CD4-positive, alpha-beta memory T cell (primary cell): ENCODE measurements at regions of chr19 and their contacts with region 1.

Region 1: GRCh38 chr19:16351133-16351809 is 26.6 kb downstream of the KLF2 start:
- DNase-seq: peak in 1 of 5 donors; percentile 28
- H3K4me3 ChIP-seq: peak overlapping the region in 1 of 2 donors; percentile 8
- H3K4me3 Mint-ChIP-seq: peak overlapping the region; percentile 56 to 78 (median 72)
- H3K27ac ChIP-seq: no peak overlapping the region
- H3K27ac Mint-ChIP-seq: peak overlapping the region in 6 of 7 donors; percentile 58 to 89 (median 81)
- H3K4me1 ChIP-seq: peaks cover 48% of the 10 kb centered on the region
- H3K4me1 Mint-ChIP-seq: peaks cover 22 to 61% (median 41%) of the 10 kb centered on the region in 4 donors
- H3K27me3 ChIP-seq: no peaks in the 10 kb centered on the region
- H3K27me3 Mint-ChIP-seq: no peaks in the 10 kb centered on the region

Region 2: DNA sequence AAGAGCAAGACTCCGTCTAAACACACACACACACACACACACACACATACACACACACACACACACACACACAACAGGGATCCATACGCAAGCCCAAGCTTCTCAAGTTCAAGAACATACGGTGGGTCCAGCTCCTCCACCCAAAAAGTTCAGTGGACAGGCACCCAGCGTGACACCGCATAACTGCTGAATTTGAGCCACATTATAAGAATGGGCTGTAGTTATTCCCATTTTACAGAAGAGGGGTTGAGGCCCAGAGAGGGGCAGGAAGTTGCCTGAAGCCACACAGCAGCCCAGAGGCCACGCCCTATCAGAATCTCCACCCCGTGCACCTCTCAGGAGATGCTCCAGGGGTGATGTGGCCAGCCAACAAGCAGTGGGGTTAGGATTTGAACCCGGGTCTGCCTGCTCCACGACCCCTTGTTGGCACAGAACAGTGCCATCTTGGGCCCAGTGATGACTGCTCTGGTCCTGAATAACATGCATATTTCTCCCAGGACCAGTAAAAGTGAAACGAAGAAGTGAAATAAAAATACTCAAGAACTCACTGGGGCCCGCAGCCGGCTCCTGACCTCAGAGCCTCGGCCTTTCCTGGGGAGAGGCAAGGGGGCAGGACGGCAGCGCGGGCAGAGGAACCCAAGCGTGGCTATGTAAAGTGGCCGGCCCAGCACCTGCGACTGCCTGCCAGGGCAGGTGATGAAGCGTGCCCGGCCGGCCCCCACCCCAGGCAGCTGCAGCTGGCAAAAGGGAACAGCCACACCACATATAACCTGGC is 91.7 kb before region 1 on chr19:
- CTCF ChIA-PET with region 1: no interaction called
- POLR2A ChIA-PET with region 1: no interaction called
- intact Hi-C with region 1: no loop called
- DNase-seq: no peak
- H3K4me3 ChIP-seq: no peak overlapping the region
- H3K4me3 Mint-ChIP-seq: peak overlapping the region in 5 of 8 donors; percentile 2 to 62 (median 18)
- H3K27ac ChIP-seq: no peak overlapping the region
- H3K27ac Mint-ChIP-seq: peak overlapping the region in 2 of 7 donors; percentile 84 to 86
- H3K4me1 ChIP-seq: peaks cover 59% of the 10 kb centered on the region
- H3K4me1 Mint-ChIP-seq: peaks cover 23 to 70% (median 44%) of the 10 kb centered on the region in 4 donors
- H3K27me3 ChIP-seq: no peaks in the 10 kb centered on the region
- H3K27me3 Mint-ChIP-seq: no peaks in the 10 kb centered on the region

Region 3: DNA sequence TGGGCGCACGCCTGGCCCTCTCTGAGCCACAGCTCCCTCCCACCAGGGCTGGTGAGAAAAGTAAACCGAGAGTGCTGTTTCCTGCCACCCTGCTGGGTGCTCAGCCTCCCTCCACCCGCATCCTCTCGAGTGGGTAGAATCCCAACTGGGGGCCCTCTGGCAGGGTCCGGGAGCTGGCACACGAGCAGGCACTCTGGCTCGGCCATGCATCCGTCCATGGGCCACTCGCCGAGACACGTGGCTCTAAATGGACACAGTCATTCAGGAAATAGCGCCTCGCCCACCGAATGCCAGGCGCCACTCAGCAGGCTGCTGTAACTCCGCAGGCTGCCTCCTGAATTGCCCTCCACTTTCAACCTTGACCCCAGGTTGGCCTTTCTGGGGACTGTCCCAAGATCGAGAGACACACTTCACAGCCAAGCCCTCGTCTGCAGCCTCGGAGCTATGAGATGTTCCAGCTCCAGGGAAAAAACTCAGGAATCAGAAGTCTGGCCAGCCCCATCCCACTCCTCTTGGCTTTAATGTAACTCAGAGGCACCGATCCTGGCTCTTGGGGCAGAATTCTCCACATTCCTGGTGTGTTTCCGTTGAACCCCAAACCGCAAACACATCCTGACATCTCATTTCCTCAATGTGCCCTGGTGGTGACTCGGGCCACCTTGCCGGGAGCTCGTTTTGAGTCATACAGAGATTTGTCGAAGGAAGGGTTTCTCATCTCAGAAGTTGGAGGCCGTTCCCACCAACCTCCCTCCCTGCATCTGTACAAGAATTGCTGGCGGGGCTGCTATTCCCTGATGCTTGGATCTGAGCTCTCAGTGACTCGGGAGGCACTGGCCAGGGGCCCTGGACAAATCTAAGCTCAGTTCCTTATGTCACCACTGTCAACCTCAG is 12.6 kb before region 1 on chr19:
- CTCF ChIA-PET with region 1: interaction called, 10 read pairs
- POLR2A ChIA-PET with region 1: interaction called, 6,478 read pairs
- intact Hi-C with region 1: no loop called
- DNase-seq: peak; percentile 29 to 73 (median 46)
- H3K4me3 ChIP-seq: peak overlapping the region; percentile 48
- H3K4me3 Mint-ChIP-seq: peak overlapping the region; percentile 83 to 97 (median 90)
- H3K27ac ChIP-seq: peak overlapping the region; percentile 66
- H3K27ac Mint-ChIP-seq: peak overlapping the region; percentile 78 to 99 (median 96)
- H3K4me1 ChIP-seq: peaks cover 70% of the 10 kb centered on the region
- H3K4me1 Mint-ChIP-seq: peaks cover 41 to 77% (median 56%) of the 10 kb centered on the region in 4 donors
- H3K27me3 ChIP-seq: no peaks in the 10 kb centered on the region
- H3K27me3 Mint-ChIP-seq: no peaks in the 10 kb centered on the region